HepG2 (cell line): ENCODE measurements at regions of chr5 and their contacts with region 1.

Region 1: DNA sequence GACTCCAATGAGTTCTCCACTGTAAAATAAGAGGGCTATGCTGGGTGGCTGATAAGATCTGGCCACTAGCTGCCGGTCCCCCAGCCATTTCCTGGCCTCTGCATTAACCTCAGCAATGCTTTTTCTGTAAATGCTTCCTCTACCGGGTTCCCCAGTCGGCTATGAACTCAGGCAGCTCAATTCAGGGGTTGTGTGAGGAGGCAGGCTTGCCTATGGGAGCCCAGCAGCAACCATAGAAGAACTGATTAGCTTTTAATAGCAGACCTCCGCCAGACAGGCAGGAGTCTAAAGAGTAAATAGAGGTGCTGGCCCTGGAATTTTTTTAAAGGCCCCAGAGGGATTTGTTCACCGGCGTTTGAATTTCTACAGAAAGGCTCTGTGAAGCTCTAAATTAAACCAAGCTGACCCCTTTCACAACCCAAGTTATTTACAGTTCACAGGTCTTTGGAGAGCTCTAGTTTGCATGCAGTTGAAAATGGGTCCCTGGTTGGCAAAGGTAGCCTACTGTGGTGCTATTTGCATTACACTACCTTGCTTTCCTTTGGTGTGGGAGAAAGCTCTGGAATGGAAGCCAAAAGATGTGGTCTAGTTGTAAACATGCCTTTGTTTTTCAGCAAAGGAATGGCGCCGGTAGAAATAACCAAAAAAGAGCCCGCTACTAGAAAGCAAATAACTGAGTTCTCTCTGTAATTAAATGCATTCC is 289.7 kb upstream of the SEMA6A start:
- DNase-seq: peak; percentile 99
- ATAC-seq: peak; percentile 90
- H3K4me3 ChIP-seq: peak overlapping the region in 2 of 3 experiments; percentile 23 to 42; a peak in 3 of 6 replicates
- H3K27ac ChIP-seq: peak overlapping the region; percentile 99
- H3K4me1 ChIP-seq: peaks cover 76% of the 10 kb centered on the region
- H3K27me3 ChIP-seq: no peaks in the 10 kb centered on the region
- CTCF ChIP-seq: peak; percentile 14; the same call in 1 of the 2 replicates
- EP300 ChIP-seq: peak; percentile 84 to 95; a peak in 3 of 4 replicates
- POLR2A ChIP-seq: peak in 1 of 2 experiments; percentile 60; a peak in 2 of 4 replicates
- RAD21 ChIP-seq: peak; percentile 16; the same call in 1 of the 2 replicates

Region 2: DNA sequence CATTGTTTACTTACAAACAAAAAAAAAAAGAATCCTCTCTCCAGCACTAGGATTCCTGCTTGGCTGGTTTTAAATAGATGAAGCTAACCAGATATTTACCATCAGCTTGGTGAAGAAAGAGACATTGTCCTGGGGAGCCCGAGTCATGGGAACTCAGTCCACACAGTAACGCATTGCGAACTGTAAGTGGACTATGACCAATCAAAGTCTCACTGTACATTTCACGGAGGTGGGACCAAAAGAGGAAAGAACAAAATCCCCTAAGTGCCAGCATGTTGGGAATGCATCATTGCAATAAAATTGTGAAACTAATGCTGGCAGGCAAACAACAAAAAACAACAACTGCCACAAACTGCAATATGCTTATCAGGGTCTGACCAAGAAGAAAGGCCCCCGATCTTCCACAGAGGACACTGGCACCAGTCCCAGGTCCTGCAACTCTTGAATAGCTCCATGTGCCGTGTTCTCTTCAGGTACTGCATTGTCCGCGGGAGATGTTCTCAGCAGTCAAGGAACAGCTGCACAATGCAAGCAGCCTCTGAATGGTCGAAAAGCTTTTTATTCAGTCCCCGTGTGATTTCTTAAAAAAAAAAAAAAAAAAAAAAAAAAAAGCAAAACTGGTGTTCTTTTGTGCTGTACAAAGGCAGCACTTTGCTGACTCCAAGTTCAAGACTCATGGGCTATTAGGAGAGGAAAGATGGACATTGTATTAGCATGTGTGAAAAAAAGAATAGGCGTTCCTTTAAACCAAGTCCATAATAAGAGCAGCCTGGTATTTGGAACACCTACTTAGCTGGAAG is 327.8 kb before region 1 on chr5:
- CTCF ChIA-PET with region 1: no interaction called
- POLR2A ChIA-PET with region 1: interaction called, 3 read pairs
- in situ Hi-C with region 1: no loop called
- intact Hi-C with region 1: loop called (anchors 1 kb)
- DNase-seq: peak; percentile 94
- ATAC-seq: peak; percentile 77
- H3K4me3 ChIP-seq: peak overlapping the region; percentile 12 to 61 (median 35); a peak in 4 of 6 replicates
- H3K27ac ChIP-seq: peak overlapping the region; percentile 71
- H3K4me1 ChIP-seq: peaks cover 67% of the 10 kb centered on the region
- H3K27me3 ChIP-seq: no peaks in the 10 kb centered on the region
- CTCF ChIP-seq: no peak
- EP300 ChIP-seq: peak; percentile 32 to 73; a peak in 2 of 4 replicates
- POLR2A ChIP-seq: no peak
- RAD21 ChIP-seq: no peak

Region 3: GRCh38 chr5:116652196-116652729 is 212.0 kb before region 1 on chr5:
- CTCF ChIA-PET with region 1: no interaction called
- POLR2A ChIA-PET with region 1: no interaction called
- in situ Hi-C with region 1: no loop called
- intact Hi-C with region 1: loop called (anchors 10 kb)
- DNase-seq: peak; percentile 97
- ATAC-seq: peak; percentile 100
- H3K4me3 ChIP-seq: peak overlapping the region in 1 of 3 experiments; percentile 19; a peak in 1 of 6 replicates
- H3K27ac ChIP-seq: no peak overlapping the region
- H3K4me1 ChIP-seq: peaks cover 28% of the 10 kb centered on the region
- H3K27me3 ChIP-seq: no peaks in the 10 kb centered on the region; a peak in 1 of 5 replicates
- CTCF ChIP-seq: no peak
- EP300 ChIP-seq: peak; percentile 25 to 78; a peak in 2 of 4 replicates
- POLR2A ChIP-seq: no peak
- RAD21 ChIP-seq: no peak

Region 4: GRCh38 chr5:116766470-116766947 is 97.8 kb before region 1 on chr5:
- CTCF ChIA-PET with region 1: no interaction called
- POLR2A ChIA-PET with region 1: interaction called, 3 read pairs
- in situ Hi-C with region 1: loop called (anchors 10 kb)
- intact Hi-C with region 1: loop called (anchors 10 kb)
- DNase-seq: peak; percentile 86
- ATAC-seq: peak; percentile 67
- H3K4me3 ChIP-seq: peak overlapping the region in 1 of 3 experiments; percentile 23; a peak in 1 of 6 replicates
- H3K27ac ChIP-seq: no peak overlapping the region
- H3K4me1 ChIP-seq: peaks cover 81% of the 10 kb centered on the region
- H3K27me3 ChIP-seq: no peaks in the 10 kb centered on the region
- CTCF ChIP-seq: no peak
- EP300 ChIP-seq: peak in 1 of 2 experiments; percentile 56; a peak in 1 of 4 replicates
- POLR2A ChIP-seq: no peak
- RAD21 ChIP-seq: no peak

Region 5: DNA sequence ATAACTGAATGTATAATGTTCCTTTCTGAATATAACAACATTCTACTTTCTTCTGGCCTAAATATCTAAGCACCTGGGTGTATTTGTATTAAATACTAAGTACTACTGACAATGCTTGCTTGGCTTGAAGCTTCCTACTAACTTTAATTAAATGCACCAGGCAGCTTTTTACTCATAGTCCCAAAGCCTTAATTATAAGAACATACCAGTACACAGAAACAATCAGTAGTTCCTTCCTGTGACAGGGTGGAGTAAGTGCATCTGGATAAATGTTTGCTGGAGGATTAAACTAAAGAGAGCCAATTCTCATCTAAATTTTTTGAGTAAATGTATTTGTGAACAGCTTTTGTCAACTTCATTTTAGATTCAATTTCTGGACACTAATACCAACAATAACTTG is 268.9 kb after region 1 on chr5:
- CTCF ChIA-PET with region 1: no interaction called
- POLR2A ChIA-PET with region 1: no interaction called
- in situ Hi-C with region 1: no loop called
- intact Hi-C with region 1: no loop called
- DNase-seq: no peak
- ATAC-seq: no peak
- H3K4me3 ChIP-seq: no peak overlapping the region
- H3K27ac ChIP-seq: no peak overlapping the region
- H3K4me1 ChIP-seq: no peaks in the 10 kb centered on the region
- H3K27me3 ChIP-seq: no peaks in the 10 kb centered on the region
- CTCF ChIP-seq: no peak
- EP300 ChIP-seq: no peak
- POLR2A ChIP-seq: no peak
- RAD21 ChIP-seq: no peak